Psoas muscle (tissue), 8 donors: ENCODE measurements at regions of chr15 and their contacts with region 1.

Region 1: DNA sequence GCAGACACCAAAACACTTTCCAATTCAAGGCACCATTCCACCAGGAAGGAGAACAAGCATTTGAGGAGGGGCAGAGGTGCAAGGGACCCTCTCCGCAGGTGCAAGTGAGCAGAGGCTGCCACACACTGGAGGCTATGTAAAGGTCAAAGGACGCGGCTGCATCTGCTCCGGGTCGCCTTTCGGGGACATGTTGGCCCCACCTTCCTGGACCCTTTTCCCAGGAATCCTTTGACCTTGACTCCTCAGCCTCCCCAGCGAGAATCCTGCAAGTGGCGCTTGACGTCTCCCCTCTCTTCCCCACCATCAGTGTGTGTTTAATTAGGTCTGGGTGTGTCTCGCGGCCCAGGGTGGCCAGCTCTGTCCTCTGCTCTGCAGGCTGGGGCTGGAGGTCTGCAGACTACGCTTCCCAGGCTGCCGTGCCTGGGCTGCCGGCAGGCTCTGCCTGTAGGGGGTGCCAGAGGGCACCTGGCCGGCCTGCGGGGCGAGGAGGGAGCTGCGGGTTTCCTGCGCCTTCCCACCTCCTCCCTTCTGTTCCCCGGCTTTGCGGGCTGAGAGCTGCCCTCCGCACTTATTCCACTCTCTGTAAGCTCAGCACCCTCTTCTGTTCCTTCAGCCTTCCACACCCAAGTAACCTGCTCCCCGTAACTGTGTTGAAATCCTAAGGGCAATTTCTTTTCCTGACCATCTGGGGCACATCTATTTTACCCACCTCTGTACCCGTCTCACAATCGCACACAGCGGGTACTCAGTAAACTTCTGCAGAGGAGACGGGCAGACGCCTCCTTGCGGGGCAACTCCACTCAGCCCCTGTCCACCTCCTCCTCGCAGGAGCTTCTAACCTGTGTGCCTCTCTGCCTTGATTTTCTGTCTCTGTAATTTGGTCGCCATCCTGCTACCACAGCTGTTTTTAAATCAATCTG is 129.8 kb downstream of the NSMCE3 start:
- DNase-seq: peak; percentile 19 to 52
- ATAC-seq: peak in 2 of 4 donors; percentile 51 to 58
- H3K4me3 ChIP-seq: no peak overlapping the region
- H3K27ac ChIP-seq: no peak overlapping the region
- H3K4me1 ChIP-seq: no peaks in the 10 kb centered on the region
- H3K27me3 ChIP-seq: peaks cover 0 to 41% (median 9%) of the 10 kb centered on the region in 3 donors
- CTCF ChIP-seq: peak; percentile 54

Region 2: DNA sequence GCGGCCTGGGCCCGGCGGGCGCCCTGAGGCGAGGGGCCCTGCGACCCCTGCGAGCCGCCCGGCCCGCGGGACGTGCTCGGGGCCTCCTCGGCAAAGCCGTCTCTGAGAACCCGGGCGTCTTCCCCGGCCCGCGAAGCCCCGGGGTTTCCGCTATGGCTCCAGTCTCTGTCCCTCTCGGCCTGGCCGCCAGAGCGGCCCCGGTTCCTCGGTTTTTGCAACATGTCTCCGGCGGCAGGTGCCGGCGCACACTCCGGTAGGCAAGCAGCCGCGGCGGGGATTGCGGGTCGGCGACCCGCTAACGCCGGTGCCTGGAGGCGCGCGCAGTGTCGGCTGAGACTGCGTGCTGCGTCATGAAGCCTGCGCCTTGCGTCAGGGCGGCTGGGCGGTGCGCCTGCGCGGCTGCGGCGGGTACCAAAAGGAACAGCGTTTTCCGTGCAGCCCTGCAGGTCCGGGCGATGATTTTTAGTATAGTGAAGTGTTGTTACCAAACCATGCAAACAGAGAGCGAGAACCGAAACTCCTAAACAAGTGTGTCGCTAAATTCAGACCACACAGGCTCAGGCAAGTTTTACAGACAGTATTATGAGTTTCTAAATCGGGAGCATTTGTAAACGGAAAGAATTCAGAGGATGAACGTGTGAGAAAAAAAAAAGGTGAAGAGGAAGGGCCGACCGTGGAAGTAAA is 129.8 kb after region 1 on chr15 and contains the start of gene NSMCE3:
- intact Hi-C with region 1: loop called in 1 of 2 experiments (anchors 10 kb)
- DNase-seq: peak; percentile 91 to 95
- ATAC-seq: peak; percentile 98 to 99 (median 99)
- H3K4me3 ChIP-seq: peak within 1 kb of the TSS; percentile 95
- H3K27ac ChIP-seq: peak within 1 kb of the TSS; percentile 94
- H3K4me1 ChIP-seq: peaks cover 23% of the 10 kb centered on the region
- H3K27me3 ChIP-seq: no peaks in the 10 kb centered on the region
- CTCF ChIP-seq: no peak
- total RNA-seq, gene NSMCE3: 4.6 to 6.5 (median 5.9) TPM